ENCODE measurements at regions of chr5 and their contacts with region 1.

Region 1: DNA sequence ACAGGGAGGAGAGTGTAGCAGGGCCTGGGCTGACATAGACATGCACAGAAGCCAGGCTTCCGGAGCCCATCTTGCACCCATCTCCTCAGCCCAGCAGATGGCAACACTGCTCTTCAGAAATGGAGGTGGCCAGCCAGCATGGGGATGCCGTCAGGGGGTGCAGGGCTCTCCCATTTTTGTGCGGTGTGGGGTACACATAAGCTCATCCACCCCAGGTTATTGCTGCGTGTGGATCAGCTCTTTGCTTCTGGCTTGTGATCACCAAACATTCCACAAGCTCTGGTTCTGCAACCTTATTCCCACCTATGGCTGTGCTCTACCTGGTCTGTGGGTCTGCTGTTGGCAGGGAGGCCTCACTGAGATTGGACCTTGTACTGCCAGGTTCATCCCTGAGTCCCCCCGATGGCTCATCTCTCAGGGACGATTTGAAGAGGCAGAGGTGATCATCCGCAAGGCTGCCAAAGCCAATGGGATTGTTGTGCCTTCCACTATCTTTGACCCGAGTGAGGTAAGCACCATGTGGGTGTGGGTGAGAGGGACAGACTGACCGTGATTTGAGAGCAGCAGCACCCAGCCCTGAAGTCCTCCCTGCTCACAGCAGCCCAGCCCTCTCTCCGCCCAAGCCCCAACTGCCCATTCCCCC is 17.3 kb downstream of the SLC22A5 start:
- DNase-seq: peak; percentile 66
- ATAC-seq: peak; percentile 25
- H3K4me3 ChIP-seq: no peak overlapping the region
- H3K27ac ChIP-seq: peak overlapping the region; percentile 99
- H3K4me1 ChIP-seq: peaks cover 52% of the 10 kb centered on the region
- H3K27me3 ChIP-seq: no peaks in the 10 kb centered on the region
- CTCF ChIP-seq: peak; percentile 79

Region 2: DNA sequence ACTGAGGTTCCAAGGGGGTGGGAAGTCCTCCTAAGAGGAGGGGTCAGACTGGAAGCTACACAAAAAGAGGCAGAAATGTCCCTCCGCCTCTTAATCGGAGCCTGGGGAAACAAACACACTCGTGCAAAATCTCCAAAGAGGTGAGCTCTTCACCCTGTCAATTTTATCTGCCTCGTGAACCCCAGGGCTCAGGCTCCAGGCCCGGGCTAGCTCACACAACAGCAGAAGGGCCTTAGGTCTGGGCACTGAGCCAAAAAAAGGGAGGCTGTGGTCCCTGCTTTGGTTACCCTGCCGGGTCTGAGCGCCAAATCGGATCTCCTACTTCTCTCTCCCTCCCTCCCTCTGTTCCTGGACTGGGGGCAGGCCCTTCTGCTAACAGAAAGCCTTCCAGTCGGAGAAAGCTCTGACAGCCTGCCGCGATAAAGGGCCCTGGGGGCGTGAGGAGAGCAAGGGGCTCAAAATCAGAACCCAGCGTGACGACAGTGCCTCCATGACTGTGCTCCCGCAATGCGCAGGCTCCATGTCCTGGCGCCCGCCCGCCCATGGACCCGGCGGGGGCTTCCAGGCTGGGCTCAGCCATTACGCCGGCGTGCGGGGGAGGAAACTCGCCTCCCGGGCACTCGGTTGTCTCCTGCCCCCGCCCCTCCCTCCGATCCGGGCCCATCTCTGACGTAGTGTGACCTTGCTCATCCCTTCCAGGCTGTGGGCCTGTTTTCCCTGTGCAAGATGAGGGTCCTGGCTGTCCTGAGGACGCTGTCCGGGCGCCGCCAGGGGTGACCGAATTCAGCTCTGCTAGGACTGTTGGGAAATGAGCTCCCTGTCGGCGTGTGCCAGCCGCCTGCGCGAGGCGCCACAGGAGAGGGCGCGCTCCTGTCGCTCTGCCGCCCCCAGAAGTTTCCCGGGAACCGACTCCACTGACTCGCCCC is 93.4 kb before region 1 on chr5:
- CTCF ChIA-PET with region 1: no interaction called
- POLR2A ChIA-PET with region 1: no interaction called
- intact Hi-C with region 1: loop called (anchors 5 kb)
- DNase-seq: peak; percentile 69
- ATAC-seq: peak; percentile 49
- H3K4me3 ChIP-seq: peak overlapping the region; percentile 97
- H3K27ac ChIP-seq: peak overlapping the region; percentile 94
- H3K4me1 ChIP-seq: peaks cover 18% of the 10 kb centered on the region
- H3K27me3 ChIP-seq: no peaks in the 10 kb centered on the region
- CTCF ChIP-seq: peak; percentile 31; the same call in 1 of the 2 replicates

Region 3: DNA sequence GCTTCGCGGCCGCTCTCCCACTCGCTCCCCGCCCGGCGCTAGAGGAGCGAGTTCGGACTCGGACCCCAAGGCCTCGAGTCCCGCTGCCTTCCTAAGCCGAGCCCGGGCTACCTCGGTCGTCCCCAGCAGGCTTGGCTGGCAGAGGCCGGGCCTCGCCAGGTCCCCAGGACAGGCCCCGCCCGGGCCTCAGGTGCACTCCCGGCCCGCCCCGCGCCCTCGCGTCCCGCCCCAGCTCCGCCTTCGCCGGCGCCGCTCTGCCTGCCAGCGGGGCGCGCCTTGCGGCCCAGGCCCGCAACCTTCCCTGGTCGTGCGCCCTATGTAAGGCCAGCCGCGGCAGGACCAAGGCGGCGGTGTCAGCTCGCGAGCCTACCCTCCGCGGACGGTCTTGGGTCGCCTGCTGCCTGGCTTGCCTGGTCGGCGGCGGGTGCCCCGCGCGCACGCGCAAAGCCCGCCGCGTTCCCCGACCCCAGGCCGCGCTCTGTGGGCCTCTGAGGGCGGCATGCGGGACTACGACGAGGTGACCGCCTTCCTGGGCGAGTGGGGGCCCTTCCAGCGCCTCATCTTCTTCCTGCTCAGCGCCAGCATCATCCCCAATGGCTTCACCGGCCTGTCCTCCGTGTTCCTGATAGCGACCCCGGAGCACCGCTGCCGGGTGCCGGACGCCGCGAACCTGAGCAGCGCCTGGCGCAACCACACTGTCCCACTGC is 17.1 kb before region 1 on chr5 and contains the start of gene SLC22A5:
- CTCF ChIA-PET with region 1: no interaction called
- POLR2A ChIA-PET with region 1: no interaction called
- intact Hi-C with region 1: no loop called
- DNase-seq: peak; percentile 76
- ATAC-seq: peak; percentile 85
- H3K4me3 ChIP-seq: peak within 1 kb of the TSS; percentile 97
- H3K27ac ChIP-seq: peak within 1 kb of the TSS; percentile 51
- H3K4me1 ChIP-seq: peaks cover 42% of the 10 kb centered on the region
- H3K27me3 ChIP-seq: no peaks in the 10 kb centered on the region
- CTCF ChIP-seq: no peak
- total RNA-seq, gene SLC22A5: 8.2 and 21.8 TPM in 2 replicates

Region 4: DNA sequence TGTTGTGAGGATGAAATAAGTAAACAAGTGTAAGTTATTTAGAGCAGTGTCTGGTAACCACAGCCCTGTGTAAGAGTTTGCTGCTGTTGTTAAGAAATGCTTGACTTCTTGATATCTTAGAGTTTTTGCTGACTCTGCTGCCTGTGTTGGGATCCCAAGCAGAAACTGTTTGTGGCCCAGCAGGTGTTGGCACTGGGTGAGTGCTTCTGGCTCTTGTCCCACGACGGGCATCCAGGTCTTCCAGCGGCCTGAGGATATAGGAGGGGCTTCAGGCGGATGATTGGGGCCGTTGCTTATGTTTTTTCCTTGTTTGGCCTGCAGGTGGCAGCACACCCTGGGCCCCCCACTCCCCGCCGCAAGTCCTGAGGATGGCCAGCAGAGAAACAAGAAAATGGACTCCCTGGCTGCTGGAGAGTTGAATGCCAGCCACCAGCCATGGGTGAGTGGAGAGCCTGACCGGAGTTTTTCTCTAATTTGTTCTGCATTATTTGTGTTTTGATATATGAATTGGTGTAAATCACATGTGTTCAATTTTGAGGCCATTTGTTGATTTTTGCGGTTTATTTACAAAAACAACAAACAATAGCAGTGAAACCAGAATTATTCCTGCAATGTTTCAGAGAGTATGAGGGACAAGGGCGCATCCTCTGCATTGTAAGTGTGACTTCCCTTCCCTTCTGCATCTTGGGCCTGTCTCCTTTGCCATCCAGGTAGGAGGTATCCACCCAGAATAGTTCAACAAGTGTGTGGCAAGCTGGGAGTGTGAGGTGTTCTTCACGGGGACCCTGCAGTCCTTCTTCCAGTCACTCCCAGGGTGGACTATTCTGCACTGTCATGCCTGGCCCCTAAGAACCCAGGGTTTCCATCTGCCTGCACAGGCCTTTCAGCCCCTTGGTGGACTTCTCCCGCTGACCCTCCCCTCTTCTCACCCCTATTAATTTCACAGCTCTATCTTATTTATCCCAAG is 33.0 kb after region 1 on chr5:
- CTCF ChIA-PET with region 1: no interaction called
- POLR2A ChIA-PET with region 1: no interaction called
- intact Hi-C with region 1: loop called (anchors 1 kb)
- DNase-seq: peak; percentile 68
- ATAC-seq: peak; percentile 74
- H3K4me3 ChIP-seq: no peak overlapping the region
- H3K27ac ChIP-seq: no peak overlapping the region
- H3K4me1 ChIP-seq: peaks cover 58% of the 10 kb centered on the region
- H3K27me3 ChIP-seq: no peaks in the 10 kb centered on the region
- CTCF ChIP-seq: peak; percentile 78

Region 5: GRCh38 chr5:132591145-132591544 is 204.4 kb after region 1 on chr5:
- CTCF ChIA-PET with region 1: no interaction called
- POLR2A ChIA-PET with region 1: no interaction called
- intact Hi-C with region 1: loop called (anchors 5 kb)
- DNase-seq: peak; percentile 33
- ATAC-seq: peak; percentile 59
- H3K4me3 ChIP-seq: no peak overlapping the region
- H3K27ac ChIP-seq: no peak overlapping the region
- H3K4me1 ChIP-seq: no peaks in the 10 kb centered on the region
- H3K27me3 ChIP-seq: no peaks in the 10 kb centered on the region
- CTCF ChIP-seq: peak; percentile 63

Region 6: DNA sequence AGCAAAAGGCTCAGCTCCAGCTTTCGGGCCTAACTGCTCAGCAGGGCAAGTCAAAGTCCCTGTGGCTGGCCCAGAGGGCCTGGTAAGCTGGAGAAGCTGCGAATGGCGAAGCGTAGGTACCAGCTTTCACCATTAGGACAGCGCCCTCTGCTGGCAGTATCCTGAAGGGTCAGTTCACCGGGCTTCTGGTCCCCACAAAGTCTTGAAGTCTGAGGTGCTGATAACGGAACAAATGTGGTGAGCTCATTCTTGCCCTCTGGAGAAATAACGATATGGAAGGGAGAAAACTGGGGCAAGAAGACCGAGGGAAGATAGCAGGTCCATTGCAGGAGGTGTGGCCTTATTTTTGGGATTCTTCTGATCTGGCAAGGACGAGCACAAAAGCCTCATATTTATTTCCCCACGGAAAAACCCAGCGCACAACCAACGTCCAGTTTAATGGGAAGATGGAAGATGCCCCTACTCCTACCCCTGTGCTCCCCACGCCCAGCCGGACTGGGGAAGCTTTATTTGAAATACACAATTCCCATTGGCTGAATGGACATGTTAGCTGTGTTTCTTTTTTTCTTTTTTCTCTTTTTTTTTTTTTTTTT is 433.5 kb after region 1 on chr5:
- CTCF ChIA-PET with region 1: no interaction called
- POLR2A ChIA-PET with region 1: no interaction called
- intact Hi-C with region 1: loop called (anchors 5 kb)
- DNase-seq: peak; percentile 82
- ATAC-seq: peak; percentile 83
- H3K4me3 ChIP-seq: no peak overlapping the region
- H3K27ac ChIP-seq: no peak overlapping the region
- H3K4me1 ChIP-seq: no peaks in the 10 kb centered on the region
- H3K27me3 ChIP-seq: no peaks in the 10 kb centered on the region
- CTCF ChIP-seq: peak; percentile 87